ENCODE measurements at regions of chr18 and their contacts with region 1.

Region 1: GRCh38 chr18:49178736-49179135 is 228.0 kb upstream of the SMAD7 start:
- DNase-seq: peak; percentile 36
- ATAC-seq: peak; percentile 56
- H3K4me3 ChIP-seq: no peak overlapping the region
- H3K27ac ChIP-seq: no peak overlapping the region
- H3K4me1 ChIP-seq: peaks cover 20% of the 10 kb centered on the region
- H3K27me3 ChIP-seq: no peaks in the 10 kb centered on the region
- CTCF ChIP-seq: peak; percentile 68
- EP300 ChIP-seq: no peak
- POLR2A ChIP-seq: no peak
- RAD21 ChIP-seq: peak; percentile 59

Region 2: GRCh38 chr18:49055754-49056172 is 123.0 kb before region 1 on chr18:
- CTCF ChIA-PET with region 1: no interaction called
- POLR2A ChIA-PET with region 1: no interaction called
- in situ Hi-C with region 1: loop called (anchors 10 kb)
- intact Hi-C with region 1: loop called (anchors 1 kb)
- DNase-seq: no peak
- ATAC-seq: no peak
- H3K4me3 ChIP-seq: no peak overlapping the region
- H3K27ac ChIP-seq: no peak overlapping the region
- H3K4me1 ChIP-seq: no peaks in the 10 kb centered on the region
- H3K27me3 ChIP-seq: no peaks in the 10 kb centered on the region
- CTCF ChIP-seq: no peak
- EP300 ChIP-seq: no peak
- POLR2A ChIP-seq: no peak
- RAD21 ChIP-seq: no peak

Region 3: GRCh38 chr18:49072524-49072934 is 106.2 kb before region 1 on chr18:
- CTCF ChIA-PET with region 1: no interaction called
- POLR2A ChIA-PET with region 1: no interaction called
- in situ Hi-C with region 1: no loop called
- intact Hi-C with region 1: loop called (anchors 5 kb)
- DNase-seq: peak; percentile 77
- ATAC-seq: peak; percentile 59
- H3K4me3 ChIP-seq: peak overlapping the region; percentile 9 to 36 (median 31); a peak in 3 of 6 replicates
- H3K27ac ChIP-seq: peak overlapping the region; percentile 86
- H3K4me1 ChIP-seq: peaks cover 69% of the 10 kb centered on the region
- H3K27me3 ChIP-seq: no peaks in the 10 kb centered on the region
- CTCF ChIP-seq: no peak
- EP300 ChIP-seq: peak in 1 of 2 experiments; percentile 77; a peak in 1 of 4 replicates
- POLR2A ChIP-seq: 0 out of 4 replicates have a peak, but pooled peaks of 1 of the 2 experiments have one; percentile 42
- RAD21 ChIP-seq: no peak